OCI-LY7 (cell line): ENCODE measurements at regions of chr2 and their contacts with region 1.

Region 1: GRCh38 chr2:119659601-119660342 is 19.2 kb upstream of the TMEM177 start:
- DNase-seq: peak; percentile 53
- H3K4me3 ChIP-seq: no peak overlapping the region
- H3K27ac ChIP-seq: no peak overlapping the region
- H3K4me1 ChIP-seq: no peaks in the 10 kb centered on the region
- CTCF ChIP-seq: peak; percentile 95

Region 2: GRCh38 chr2:119407430-119408220 is 252.1 kb before region 1 on chr2:
- CTCF ChIA-PET with region 1: no interaction called
- POLR2A ChIA-PET with region 1: no interaction called
- intact Hi-C with region 1: loop called (anchors 5 kb)
- DNase-seq: peak; percentile 73
- H3K4me3 ChIP-seq: no peak overlapping the region
- H3K27ac ChIP-seq: no peak overlapping the region
- H3K4me1 ChIP-seq: peaks cover 21% of the 10 kb centered on the region
- CTCF ChIP-seq: peak; percentile 85

Region 3: DNA sequence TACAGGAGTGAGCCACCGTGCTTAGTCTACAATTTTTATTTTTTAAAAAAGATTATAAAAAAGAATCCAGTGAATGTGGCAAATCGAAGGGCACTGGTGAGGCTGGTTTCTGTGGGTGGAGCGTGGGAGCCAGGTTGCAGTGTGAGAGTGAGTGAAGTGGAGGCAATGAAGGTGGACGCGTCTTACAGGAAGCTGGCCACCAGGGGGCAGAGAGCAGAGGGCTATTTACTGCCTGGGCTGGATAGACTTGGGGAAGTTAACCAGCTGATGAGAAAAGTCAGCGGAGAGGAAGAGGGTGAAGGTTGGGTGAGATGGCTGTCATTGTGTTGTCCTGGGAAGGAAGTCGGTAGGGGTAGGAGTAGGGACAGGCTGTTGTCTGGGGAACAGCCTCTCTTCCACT is 142.3 kb before region 1 on chr2:
- CTCF ChIA-PET with region 1: no interaction called
- POLR2A ChIA-PET with region 1: no interaction called
- intact Hi-C with region 1: loop called (anchors 5 kb)
- DNase-seq: peak; percentile 47
- H3K4me3 ChIP-seq: no peak overlapping the region
- H3K27ac ChIP-seq: no peak overlapping the region
- H3K4me1 ChIP-seq: no peaks in the 10 kb centered on the region
- CTCF ChIP-seq: peak; percentile 82

Region 4: DNA sequence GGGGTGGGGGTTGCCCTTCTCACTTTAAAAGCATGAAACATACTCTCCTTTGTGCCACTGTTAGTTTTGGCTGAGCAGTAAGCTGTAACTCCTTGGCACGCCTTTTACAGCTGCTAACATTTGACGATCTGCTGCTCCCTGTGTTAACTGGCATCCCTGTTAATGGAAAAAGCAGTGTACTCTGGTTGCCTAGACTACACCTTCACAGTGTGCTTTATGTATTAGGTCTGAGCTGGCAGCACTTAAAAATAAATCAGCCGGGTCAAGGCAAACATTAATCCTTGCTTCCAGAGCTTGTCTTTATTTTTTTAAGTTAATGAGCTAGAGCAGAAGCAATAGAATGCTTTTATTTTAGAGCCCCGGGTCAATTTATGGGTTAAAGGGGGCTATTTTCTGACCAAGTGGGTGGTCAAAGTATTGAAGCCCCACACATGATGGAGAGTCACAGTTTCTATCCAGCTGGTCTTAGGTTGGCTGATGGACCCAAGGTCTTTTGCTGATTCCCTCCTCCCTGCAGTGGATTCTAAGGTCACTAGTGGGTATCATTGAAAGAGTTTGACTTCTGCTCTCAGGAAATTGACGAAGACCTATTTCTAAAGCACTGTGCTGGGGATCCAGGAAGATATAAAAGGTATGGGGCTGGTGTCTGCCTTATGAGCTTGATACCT is 61.0 kb before region 1 on chr2:
- CTCF ChIA-PET with region 1: no interaction called
- POLR2A ChIA-PET with region 1: no interaction called
- intact Hi-C with region 1: no loop called
- DNase-seq: no peak
- H3K4me3 ChIP-seq: no peak overlapping the region
- H3K27ac ChIP-seq: no peak overlapping the region
- H3K4me1 ChIP-seq: no peaks in the 10 kb centered on the region
- CTCF ChIP-seq: no peak

Region 5: GRCh38 chr2:119702918-119703401 is 43.2 kb after region 1 on chr2:
- CTCF ChIA-PET with region 1: no interaction called
- POLR2A ChIA-PET with region 1: no interaction called
- intact Hi-C with region 1: no loop called
- DNase-seq: peak; percentile 75
- H3K4me3 ChIP-seq: no peak overlapping the region
- H3K27ac ChIP-seq: no peak overlapping the region
- H3K4me1 ChIP-seq: peaks cover 14% of the 10 kb centered on the region
- CTCF ChIP-seq: peak; percentile 97